Breast epithelium (tissue), 4 donors: ENCODE measurements at regions of chr1 and their contacts with region 1.

Region 1: DNA sequence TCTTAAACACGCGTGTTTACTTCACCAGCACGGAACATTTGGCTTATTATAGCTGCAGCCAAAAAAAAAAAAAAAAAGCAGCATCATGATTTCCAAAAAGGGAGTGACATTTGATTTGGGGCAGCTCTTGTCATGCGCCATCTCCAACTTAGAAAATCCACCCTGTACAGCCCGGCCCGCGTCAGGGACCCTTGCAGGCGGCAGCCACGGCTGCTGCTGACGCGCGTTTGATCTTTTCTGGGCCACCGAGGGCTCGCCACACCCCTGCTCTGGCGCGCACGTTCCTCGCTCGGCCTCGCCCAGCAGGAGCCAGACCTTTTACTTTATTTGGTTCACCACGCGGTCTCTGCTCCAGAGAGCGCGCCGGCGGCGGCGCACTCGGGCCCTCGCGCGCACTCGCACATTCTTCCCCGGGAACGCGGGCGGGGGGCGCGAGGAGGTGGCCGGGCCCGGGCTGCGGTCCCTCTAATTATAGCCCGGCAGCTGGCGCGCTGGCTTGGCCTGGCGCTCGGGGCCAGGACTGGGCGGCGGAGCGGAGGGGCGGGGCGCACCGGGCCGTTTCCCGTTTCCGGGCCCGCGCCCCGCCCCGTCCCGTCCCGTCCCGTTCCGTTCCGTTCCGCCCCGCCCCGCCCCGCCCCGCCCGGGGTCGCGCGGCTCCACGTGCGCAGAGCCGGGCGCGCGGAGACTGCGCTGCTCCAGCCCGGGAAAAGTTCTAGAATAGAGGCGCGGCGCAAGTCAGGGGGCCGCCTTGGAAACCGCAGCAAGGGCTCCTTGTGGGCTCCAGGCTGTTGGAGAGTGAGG is 10.2 kb downstream of the IRF2BP2 start:
- DNase-seq: peak; percentile 76 to 80
- H3K4me3 ChIP-seq: peak overlapping the region; percentile 49 to 82 (median 54)
- H3K27ac ChIP-seq: peak overlapping the region; percentile 98 to 99
- H3K4me1 ChIP-seq: peaks cover 0 to 16% of the 10 kb centered on the region in 2 donors
- H3K27me3 ChIP-seq: no peaks in the 10 kb centered on the region
- CTCF ChIP-seq: no peak
- POLR2A ChIP-seq: no peak

Region 2: GRCh38 chr1:234533975-234534876 is 65.6 kb before region 1 on chr1:
- intact Hi-C with region 1: loop called (anchors 10 kb)
- DNase-seq: peak; percentile 91 to 97
- H3K4me3 ChIP-seq: peak overlapping the region in 1 of 3 donors; percentile 8
- H3K27ac ChIP-seq: peak overlapping the region; percentile 98
- H3K4me1 ChIP-seq: peaks cover 19 to 67% of the 10 kb centered on the region in 2 donors
- H3K27me3 ChIP-seq: no peaks in the 10 kb centered on the region
- CTCF ChIP-seq: no peak
- POLR2A ChIP-seq: no peak

Region 3: DNA sequence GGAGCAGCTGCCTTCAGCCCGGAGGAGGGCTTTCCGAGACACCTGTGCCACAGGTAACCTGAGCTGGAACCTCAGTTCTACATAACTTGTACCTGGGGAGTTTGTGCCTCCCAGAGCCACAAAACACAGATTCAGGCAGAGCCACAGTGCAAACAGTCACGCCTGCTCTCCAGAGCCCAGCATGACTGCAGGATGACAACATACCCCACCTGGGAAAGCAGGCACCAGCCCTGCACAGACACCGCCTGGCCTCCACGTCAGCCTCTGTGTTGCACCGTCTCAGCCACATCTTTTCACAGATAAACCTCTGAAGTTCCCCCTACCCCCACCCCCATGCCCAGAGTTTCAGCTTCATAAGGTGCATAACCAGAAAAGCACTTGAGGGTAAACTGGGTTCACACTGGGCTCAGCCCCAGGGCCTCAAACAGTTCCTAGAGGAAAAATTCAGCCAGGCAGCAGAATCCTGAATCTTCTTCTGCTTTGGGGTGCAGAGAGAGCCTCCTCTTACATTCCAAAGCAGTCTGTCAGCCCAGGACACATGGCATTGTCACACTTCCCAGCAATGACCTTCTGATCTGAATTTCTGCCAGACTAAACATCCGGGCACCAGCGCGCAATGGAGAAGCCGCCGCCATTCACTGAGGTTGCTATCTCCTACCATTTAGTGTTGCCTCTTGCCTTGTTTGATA is 299.4 kb after region 1 on chr1:
- intact Hi-C with region 1: no loop called
- DNase-seq: no peak
- H3K4me3 ChIP-seq: no peak overlapping the region
- H3K27ac ChIP-seq: peak overlapping the region; percentile 57 to 72
- H3K4me1 ChIP-seq: no peaks in the 10 kb centered on the region
- H3K27me3 ChIP-seq: no peaks in the 10 kb centered on the region
- CTCF ChIP-seq: no peak
- POLR2A ChIP-seq: no peak

Region 4: DNA sequence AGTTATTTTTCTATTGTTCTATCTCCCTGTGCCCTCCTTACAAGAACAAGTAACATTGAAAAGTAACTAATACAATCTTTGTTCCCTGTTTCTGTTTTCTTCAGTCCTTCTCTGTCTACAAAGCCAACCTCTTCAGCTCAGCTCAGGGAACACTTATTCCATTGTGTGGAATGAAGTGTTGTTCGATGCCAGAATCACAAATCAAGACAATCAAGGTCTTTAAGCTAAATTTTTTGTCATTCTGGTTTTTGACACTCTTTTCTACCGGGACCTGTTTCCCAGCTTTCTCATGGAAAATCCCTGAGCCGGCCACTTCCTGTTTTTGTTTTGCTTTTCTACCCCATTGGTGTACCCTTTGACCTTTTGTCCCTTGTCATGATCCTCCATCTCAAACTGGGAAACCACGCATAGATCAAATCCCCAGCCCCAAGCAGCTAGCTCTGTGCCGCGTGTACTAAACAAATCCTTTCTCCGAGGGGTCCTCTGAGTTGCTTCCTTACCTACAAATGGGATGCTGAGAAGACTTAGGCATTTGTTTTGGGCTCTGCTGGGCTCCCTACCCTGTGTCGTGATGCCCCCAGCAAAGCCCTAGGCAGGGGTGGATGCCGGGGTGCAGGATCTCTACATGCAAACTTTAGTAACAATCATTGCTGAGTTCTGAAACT is 387.1 kb after region 1 on chr1:
- intact Hi-C with region 1: no loop called
- DNase-seq: no peak
- H3K4me3 ChIP-seq: no peak overlapping the region
- H3K27ac ChIP-seq: peak overlapping the region; percentile 92 to 96
- H3K4me1 ChIP-seq: peaks cover 13 to 36% of the 10 kb centered on the region in 2 donors
- H3K27me3 ChIP-seq: no peaks in the 10 kb centered on the region
- CTCF ChIP-seq: no peak
- POLR2A ChIP-seq: no peak